Breast epithelium (tissue), 4 donors: ENCODE measurements at regions of chr14 and their contacts with region 1.

Region 1: GRCh38 chr14:87087881-87088280 is 905.1 kb downstream of the GALC start:
- DNase-seq: no peak
- H3K4me3 ChIP-seq: no peak overlapping the region
- H3K27ac ChIP-seq: no peak overlapping the region
- H3K4me1 ChIP-seq: no peaks in the 10 kb centered on the region
- H3K27me3 ChIP-seq: no peaks in the 10 kb centered on the region
- CTCF ChIP-seq: no peak
- POLR2A ChIP-seq: no peak

Region 2: DNA sequence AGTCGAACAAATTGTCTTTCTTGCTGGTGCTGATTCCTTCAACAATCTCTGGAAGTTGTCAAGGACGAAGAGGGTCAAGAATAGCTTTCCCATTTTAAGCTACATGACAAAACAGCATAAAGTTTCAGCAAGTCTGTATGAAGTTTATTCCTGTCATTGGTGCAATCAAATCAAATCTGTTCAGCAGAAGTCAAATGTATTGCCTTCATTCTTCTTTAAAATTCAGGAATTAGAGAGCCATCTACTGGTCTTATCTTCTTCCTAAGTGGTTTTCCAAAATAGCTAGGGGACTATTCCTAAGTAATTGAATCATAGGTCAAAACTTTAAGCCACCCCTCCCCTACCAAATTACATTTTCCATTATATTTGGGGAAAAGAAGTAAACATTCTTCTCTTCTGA is 85.1 kb before region 1 on chr14:
- intact Hi-C with region 1: no loop called
- DNase-seq: no peak
- H3K4me3 ChIP-seq: no peak overlapping the region
- H3K27ac ChIP-seq: no peak overlapping the region
- H3K4me1 ChIP-seq: no peaks in the 10 kb centered on the region
- H3K27me3 ChIP-seq: no peaks in the 10 kb centered on the region
- CTCF ChIP-seq: no peak
- POLR2A ChIP-seq: no peak

Region 3: DNA sequence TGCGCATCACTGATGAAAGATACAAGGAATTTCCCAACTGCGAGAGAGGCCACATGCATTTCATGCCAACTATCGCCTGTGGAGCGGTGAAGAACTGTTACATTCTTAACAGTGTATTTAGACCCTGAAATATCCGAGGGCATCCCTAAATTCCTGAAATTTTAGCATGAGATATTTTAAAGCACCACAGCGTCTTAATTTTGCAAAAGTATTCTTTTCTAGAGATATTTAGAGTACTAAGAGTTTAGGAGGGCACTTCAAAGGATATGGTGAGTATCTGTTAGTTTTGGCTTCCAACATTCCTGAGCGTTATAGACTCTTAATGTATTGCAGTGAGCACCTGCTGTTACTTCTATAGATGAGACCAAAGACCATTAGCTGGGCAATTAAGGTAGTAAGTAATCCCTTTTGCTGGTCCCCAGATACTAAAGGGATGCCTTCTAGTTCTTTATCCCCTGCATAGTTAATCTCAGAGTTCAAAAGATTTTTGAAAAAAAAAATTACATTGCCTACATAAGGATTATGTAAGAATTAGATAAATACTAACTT is 70.6 kb before region 1 on chr14:
- intact Hi-C with region 1: no loop called
- DNase-seq: no peak
- H3K4me3 ChIP-seq: no peak overlapping the region
- H3K27ac ChIP-seq: no peak overlapping the region
- H3K4me1 ChIP-seq: no peaks in the 10 kb centered on the region
- H3K27me3 ChIP-seq: no peaks in the 10 kb centered on the region
- CTCF ChIP-seq: no peak
- POLR2A ChIP-seq: no peak

Region 4: GRCh38 chr14:87108726-87109125 is 20.8 kb after region 1 on chr14:
- intact Hi-C with region 1: loop called (anchors 1 kb)
- DNase-seq: no peak
- H3K4me3 ChIP-seq: no peak overlapping the region
- H3K27ac ChIP-seq: no peak overlapping the region
- H3K4me1 ChIP-seq: no peaks in the 10 kb centered on the region
- H3K27me3 ChIP-seq: no peaks in the 10 kb centered on the region
- CTCF ChIP-seq: no peak
- POLR2A ChIP-seq: no peak

Region 5: GRCh38 chr14:88023658-88024187 is 935.8 kb after region 1 on chr14:
- intact Hi-C with region 1: no loop called
- DNase-seq: no peak
- H3K4me3 ChIP-seq: no peak overlapping the region
- H3K27ac ChIP-seq: no peak overlapping the region
- H3K4me1 ChIP-seq: no peaks in the 10 kb centered on the region
- H3K27me3 ChIP-seq: no peaks in the 10 kb centered on the region
- CTCF ChIP-seq: no peak
- POLR2A ChIP-seq: no peak